ENCODE measurements at regions of chr3 and their contacts with region 1.

Region 1: DNA sequence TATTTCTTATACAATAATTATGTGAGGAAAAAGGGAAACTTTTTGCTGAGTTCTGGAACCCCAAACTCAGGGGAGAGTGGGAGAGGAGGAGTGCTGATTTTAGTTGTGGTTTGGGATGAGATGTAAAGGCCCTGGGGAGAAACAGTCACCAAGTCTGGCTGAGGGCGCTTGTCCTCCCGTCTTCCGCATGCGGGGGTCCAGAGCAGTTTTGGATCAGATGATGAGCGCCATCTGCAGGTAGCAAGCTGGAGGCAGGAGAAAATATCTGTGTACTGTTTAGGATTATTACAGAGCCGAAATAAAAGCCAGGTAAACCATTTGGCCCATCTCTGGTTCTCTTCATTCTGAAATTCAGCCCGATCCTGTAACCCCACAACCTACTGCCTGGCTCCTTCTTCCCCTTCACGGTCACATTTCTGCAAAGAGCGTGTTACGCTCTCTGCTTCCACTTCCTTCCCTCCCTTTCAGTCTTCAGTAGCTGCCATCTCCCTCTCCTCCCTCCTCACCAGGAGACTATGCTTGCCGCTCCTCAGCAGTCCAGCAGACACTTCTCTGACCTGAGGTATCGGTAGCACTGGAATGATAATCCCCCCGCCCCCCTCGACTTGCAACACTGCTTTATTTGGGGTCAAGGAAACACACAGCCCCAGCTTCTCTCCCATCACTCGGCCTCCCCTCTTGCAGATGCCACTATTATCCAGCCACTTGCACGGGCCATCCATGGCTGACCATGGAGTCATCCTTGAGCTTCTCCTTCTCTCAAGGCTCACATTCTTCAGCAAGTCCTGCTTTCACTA is 1.4 kb upstream of the PARP14 start:
- DNase-seq: peak; percentile 79
- ATAC-seq: peak; percentile 74
- H3K4me3 ChIP-seq: peak overlapping the region; percentile 28
- H3K27ac ChIP-seq: peak overlapping the region; percentile 9; the same call in 1 of the 2 replicates
- H3K4me1 ChIP-seq: peaks cover 13% of the 10 kb centered on the region
- H3K27me3 ChIP-seq: no peaks in the 10 kb centered on the region
- CTCF ChIP-seq: peak; percentile 89
- POLR2A ChIP-seq: no peak
- RAD21 ChIP-seq: peak; percentile 87

Region 2: GRCh38 chr3:122101646-122102045 is 577.6 kb before region 1 on chr3:
- CTCF ChIA-PET with region 1: no interaction called
- POLR2A ChIA-PET with region 1: no interaction called
- dilution Hi-C with region 1: no loop called
- in situ Hi-C with region 1: no loop called
- intact Hi-C with region 1: loop called (anchors 5 kb)
- DNase-seq: peak; percentile 66
- ATAC-seq: peak; percentile 72
- H3K4me3 ChIP-seq: no peak overlapping the region
- H3K27ac ChIP-seq: no peak overlapping the region
- H3K4me1 ChIP-seq: no peaks in the 10 kb centered on the region
- H3K27me3 ChIP-seq: peaks cover 13% of the 10 kb centered on the region
- CTCF ChIP-seq: peak; percentile 74
- POLR2A ChIP-seq: no peak
- RAD21 ChIP-seq: peak; percentile 82

Region 3: GRCh38 chr3:122245513-122246174 is 433.6 kb before region 1 on chr3:
- CTCF ChIA-PET with region 1: no interaction called
- POLR2A ChIA-PET with region 1: no interaction called
- dilution Hi-C with region 1: no loop called
- in situ Hi-C with region 1: no loop called
- intact Hi-C with region 1: no loop called
- DNase-seq: peak; percentile 78
- ATAC-seq: peak; percentile 80
- H3K4me3 ChIP-seq: peak overlapping the region; percentile 17; the same call in 1 of the 2 replicates
- H3K27ac ChIP-seq: no peak overlapping the region
- H3K4me1 ChIP-seq: peaks cover 10% of the 10 kb centered on the region
- H3K27me3 ChIP-seq: peaks cover 3% of the 10 kb centered on the region
- CTCF ChIP-seq: no peak
- POLR2A ChIP-seq: no peak
- RAD21 ChIP-seq: no peak

Region 4: DNA sequence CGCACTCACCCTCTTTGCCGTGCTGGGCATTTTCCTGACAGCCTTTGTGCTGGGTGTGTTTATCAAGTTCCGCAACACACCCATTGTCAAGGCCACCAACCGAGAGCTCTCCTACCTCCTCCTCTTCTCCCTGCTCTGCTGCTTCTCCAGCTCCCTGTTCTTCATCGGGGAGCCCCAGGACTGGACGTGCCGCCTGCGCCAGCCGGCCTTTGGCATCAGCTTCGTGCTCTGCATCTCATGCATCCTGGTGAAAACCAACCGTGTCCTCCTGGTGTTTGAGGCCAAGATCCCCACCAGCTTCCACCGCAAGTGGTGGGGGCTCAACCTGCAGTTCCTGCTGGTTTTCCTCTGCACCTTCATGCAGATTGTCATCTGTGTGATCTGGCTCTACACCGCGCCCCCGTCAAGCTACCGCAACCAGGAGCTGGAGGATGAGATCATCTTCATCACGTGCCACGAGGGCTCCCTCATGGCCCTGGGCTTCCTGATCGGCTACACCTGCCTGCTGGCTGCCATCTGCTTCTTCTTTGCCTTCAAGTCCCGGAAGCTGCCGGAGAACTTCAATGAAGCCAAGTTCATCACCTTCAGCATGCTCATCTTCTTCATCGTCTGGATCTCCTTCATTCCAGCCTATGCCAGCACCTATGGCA is 395.4 kb before region 1 on chr3:
- CTCF ChIA-PET with region 1: no interaction called
- POLR2A ChIA-PET with region 1: no interaction called
- dilution Hi-C with region 1: no loop called
- in situ Hi-C with region 1: no loop called
- intact Hi-C with region 1: no loop called
- DNase-seq: no peak
- ATAC-seq: no peak
- H3K4me3 ChIP-seq: no peak overlapping the region
- H3K27ac ChIP-seq: no peak overlapping the region
- H3K4me1 ChIP-seq: no peaks in the 10 kb centered on the region
- H3K27me3 ChIP-seq: peaks cover 10% of the 10 kb centered on the region
- CTCF ChIP-seq: no peak
- POLR2A ChIP-seq: no peak
- RAD21 ChIP-seq: no peak

Region 5: DNA sequence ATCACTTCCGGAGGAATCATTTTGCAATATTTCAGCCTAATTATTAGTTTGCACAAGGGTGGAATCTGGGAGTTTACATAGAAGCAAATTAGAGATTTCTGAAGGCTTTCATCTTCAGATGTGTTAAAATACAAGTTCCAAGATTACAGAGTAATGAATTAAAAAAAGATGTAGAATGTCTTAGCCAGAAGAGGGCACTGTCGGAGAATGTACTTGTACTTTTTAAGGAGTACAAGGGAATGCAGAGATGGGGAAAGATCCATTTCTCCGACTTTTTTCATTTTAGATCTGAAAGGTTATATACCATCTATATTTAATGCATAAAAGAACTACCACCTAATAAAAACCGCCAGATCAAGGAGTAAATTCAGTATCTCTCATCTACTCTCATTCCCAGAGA is 220.3 kb before region 1 on chr3:
- CTCF ChIA-PET with region 1: interaction called, 6 read pairs
- POLR2A ChIA-PET with region 1: no interaction called
- dilution Hi-C with region 1: no loop called
- in situ Hi-C with region 1: loop called (anchors 5 kb)
- intact Hi-C with region 1: loop called (anchors 1 kb)
- DNase-seq: peak; percentile 62
- ATAC-seq: peak; percentile 80
- H3K4me3 ChIP-seq: no peak overlapping the region
- H3K27ac ChIP-seq: no peak overlapping the region
- H3K4me1 ChIP-seq: no peaks in the 10 kb centered on the region
- H3K27me3 ChIP-seq: no peaks in the 10 kb centered on the region
- CTCF ChIP-seq: peak; percentile 55
- POLR2A ChIP-seq: no peak
- RAD21 ChIP-seq: peak; percentile 66

Region 6: GRCh38 chr3:122564155-122564912 is 114.9 kb before region 1 on chr3 and contains the starts of genes DTX3L and PARP9:
- CTCF ChIA-PET with region 1: interaction called, 34 read pairs
- POLR2A ChIA-PET with region 1: interaction called, 3 read pairs
- dilution Hi-C with region 1: no loop called
- in situ Hi-C with region 1: loop called (anchors 5 kb)
- intact Hi-C with region 1: loop called (anchors 1 kb)
- DNase-seq: peak; percentile 73
- ATAC-seq: peak; percentile 97
- H3K4me3 ChIP-seq: peak within 1 kb of the TSS; percentile 63
- H3K27ac ChIP-seq: peak within 1 kb of the TSS; percentile 88
- H3K4me1 ChIP-seq: peaks cover 3% of the 10 kb centered on the region; the same call in 1 of the 2 replicates
- H3K27me3 ChIP-seq: no peaks in the 10 kb centered on the region
- CTCF ChIP-seq: no peak
- POLR2A ChIP-seq: 0 out of 2 replicates have a peak, but pooled peaks have one; percentile 24
- RAD21 ChIP-seq: no peak
- total RNA-seq, gene DTX3L: 7.9 and 8.9 TPM in 2 replicates
- total RNA-seq, gene PARP9: 7.7 and 8.6 TPM in 2 replicates

Region 7: GRCh38 chr3:123028233-123028828 is 349.0 kb after region 1 on chr3:
- CTCF ChIA-PET with region 1: no interaction called
- POLR2A ChIA-PET with region 1: no interaction called
- dilution Hi-C with region 1: no loop called
- in situ Hi-C with region 1: no loop called
- intact Hi-C with region 1: loop called (anchors 5 kb)
- DNase-seq: peak; percentile 72
- ATAC-seq: peak; percentile 79
- H3K4me3 ChIP-seq: peak overlapping the region; percentile 24
- H3K27ac ChIP-seq: no peak overlapping the region
- H3K4me1 ChIP-seq: peaks cover 5% of the 10 kb centered on the region; the same call in 1 of the 2 replicates
- H3K27me3 ChIP-seq: peaks cover 87% of the 10 kb centered on the region
- CTCF ChIP-seq: peak; percentile 65
- POLR2A ChIP-seq: no peak
- RAD21 ChIP-seq: peak; percentile 73

Measured in IMR-90 (cell line).